Natural killer cell (primary cell): ENCODE measurements at regions of chr1 and their contacts with region 1.

Region 1: DNA sequence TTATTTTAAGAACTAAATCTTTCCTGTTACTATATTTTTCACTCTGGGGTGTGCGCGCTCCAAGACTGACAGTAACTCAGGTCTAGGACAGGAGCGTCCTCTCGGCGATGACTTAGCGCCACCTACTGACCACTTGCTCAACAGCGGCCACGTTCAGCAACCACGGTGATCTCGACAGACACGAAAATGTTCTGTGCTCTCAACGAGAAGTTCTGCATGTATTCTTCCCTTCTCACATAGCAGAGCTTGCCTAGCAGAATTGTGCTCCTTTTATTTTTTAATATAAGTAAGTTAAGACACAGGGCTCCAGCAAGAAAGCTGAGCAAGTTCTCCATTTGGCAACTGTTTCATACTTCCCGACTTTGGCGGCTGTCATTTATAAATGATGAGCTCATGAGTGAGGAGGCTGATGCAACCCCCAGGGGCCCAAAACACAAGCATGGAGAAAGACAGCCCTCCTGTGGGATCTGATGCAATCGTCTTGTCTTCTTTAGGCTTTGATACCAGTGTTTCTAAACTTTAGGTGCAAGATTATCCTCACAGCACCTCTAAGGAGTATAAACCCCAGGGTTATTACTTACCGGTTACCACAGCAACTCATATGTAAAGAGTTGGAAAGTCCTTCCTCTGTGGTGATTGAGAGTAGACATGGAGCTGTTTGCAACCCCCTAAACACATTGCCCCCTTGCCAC is 92.6 kb downstream of the HHIPL2 start:
- DNase-seq: peak; percentile 66 to 92
- ATAC-seq: peak; percentile 82 to 99 (median 98)
- H3K4me3 ChIP-seq: no peak overlapping the region
- H3K4me3 Mint-ChIP-seq: no peak overlapping the region
- H3K27ac ChIP-seq: no peak overlapping the region
- H3K27ac Mint-ChIP-seq: no peak overlapping the region
- H3K4me1 ChIP-seq: peaks cover 9% of the 10 kb centered on the region
- H3K4me1 Mint-ChIP-seq: peaks cover 6 to 7% of the 10 kb centered on the region in 2 donors
- H3K27me3 ChIP-seq: no peaks in the 10 kb centered on the region
- H3K27me3 Mint-ChIP-seq: peaks cover 0 to 2% of the 10 kb centered on the region in 2 donors
- CTCF ChIP-seq: peak; percentile 85

Region 2: GRCh38 chr1:220810179-220810653 is 1645.1 kb before region 1 on chr1:
- intact Hi-C with region 1: loop called (anchors 1 kb)
- DNase-seq: peak; percentile 58 to 84
- ATAC-seq: peak; percentile 93 to 99 (median 99)
- H3K4me3 ChIP-seq: no peak overlapping the region
- H3K4me3 Mint-ChIP-seq: peak overlapping the region; percentile 61
- H3K27ac ChIP-seq: no peak overlapping the region
- H3K27ac Mint-ChIP-seq: no peak overlapping the region
- H3K4me1 ChIP-seq: no peaks in the 10 kb centered on the region
- H3K4me1 Mint-ChIP-seq: peaks cover 6 to 9% of the 10 kb centered on the region in 2 donors
- H3K27me3 ChIP-seq: no peaks in the 10 kb centered on the region
- H3K27me3 Mint-ChIP-seq: peaks cover 12 to 23% of the 10 kb centered on the region in 2 donors
- CTCF ChIP-seq: peak; percentile 90

Region 3: GRCh38 chr1:220879076-220879508 is 1576.2 kb before region 1 on chr1 and contains the start of gene HLX:
- intact Hi-C with region 1: loop called (anchors 10 kb)
- DNase-seq: peak in 1 of 2 donors; percentile 11
- ATAC-seq: peak; percentile 48 to 85 (median 49)
- H3K4me3 ChIP-seq: peak within 1 kb of the TSS; percentile 30
- H3K4me3 Mint-ChIP-seq: peak within 1 kb of the TSS; percentile 84
- H3K27ac ChIP-seq: peak within 1 kb of the TSS; percentile 34
- H3K27ac Mint-ChIP-seq: no peak within 1 kb of the TSS
- H3K4me1 ChIP-seq: peaks cover 41% of the 10 kb centered on the region
- H3K4me1 Mint-ChIP-seq: peaks cover 28 to 34% of the 10 kb centered on the region in 2 donors
- H3K27me3 ChIP-seq: peaks cover 25% of the 10 kb centered on the region
- H3K27me3 Mint-ChIP-seq: peaks cover 69 to 79% of the 10 kb centered on the region in 2 donors
- CTCF ChIP-seq: no peak
- total RNA-seq, gene HLX: 0.93 to 19.3 (median 1.0) TPM

Region 4: GRCh38 chr1:221435504-221435904 is 1019.8 kb before region 1 on chr1:
- intact Hi-C with region 1: loop called (anchors 1 kb)
- DNase-seq: peak in 1 of 2 donors; percentile 59
- ATAC-seq: peak; percentile 68 to 87 (median 74)
- H3K4me3 ChIP-seq: no peak overlapping the region
- H3K4me3 Mint-ChIP-seq: no peak overlapping the region
- H3K27ac ChIP-seq: no peak overlapping the region
- H3K27ac Mint-ChIP-seq: no peak overlapping the region
- H3K4me1 ChIP-seq: no peaks in the 10 kb centered on the region
- H3K4me1 Mint-ChIP-seq: peaks cover 0 to 4% of the 10 kb centered on the region in 2 donors
- H3K27me3 ChIP-seq: no peaks in the 10 kb centered on the region
- H3K27me3 Mint-ChIP-seq: peaks cover 4 to 25% of the 10 kb centered on the region in 2 donors
- CTCF ChIP-seq: peak; percentile 97

Region 5: DNA sequence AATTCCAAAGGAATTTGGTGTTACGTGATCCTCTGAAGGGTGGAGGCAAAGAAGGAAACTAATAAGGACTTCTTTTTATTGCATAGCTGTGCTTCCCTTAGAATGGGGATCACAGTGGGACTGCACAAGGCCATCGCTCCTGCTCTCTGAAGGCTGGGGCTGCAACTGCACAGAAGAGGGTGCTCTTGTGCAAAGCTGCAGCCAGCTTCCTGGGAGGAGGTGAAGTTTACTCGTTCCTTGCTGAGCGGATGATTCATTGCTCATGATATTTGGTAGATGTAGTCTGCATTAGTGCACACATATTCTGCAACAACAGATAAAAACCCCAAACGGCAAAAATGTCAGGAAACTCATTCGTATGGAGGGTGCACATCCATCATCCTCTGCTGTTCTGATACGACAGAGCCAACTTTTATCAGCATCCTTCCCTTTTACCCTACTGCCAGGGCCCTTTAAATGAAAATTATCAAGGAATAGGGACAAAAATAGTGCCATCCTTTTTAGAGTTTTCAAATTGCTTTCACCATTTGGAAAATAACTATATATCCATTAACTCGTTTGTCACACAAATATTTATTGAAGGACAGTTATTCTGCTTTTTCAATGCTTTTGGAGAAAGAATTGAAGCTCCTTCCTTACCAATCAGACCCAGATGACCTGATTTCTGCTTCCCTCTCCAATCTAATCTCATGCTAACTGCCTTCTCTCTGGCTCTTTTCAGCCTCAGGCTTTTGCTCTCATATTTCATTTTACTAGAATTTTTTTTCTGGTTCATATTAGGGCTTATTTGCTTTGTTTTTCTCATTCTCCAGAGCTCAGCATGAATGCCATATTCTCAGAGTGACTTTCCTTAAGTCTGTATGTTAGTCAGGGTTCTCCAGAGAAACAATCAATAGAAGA is 977.0 kb before region 1 on chr1:
- intact Hi-C with region 1: loop called (anchors 1 kb)
- DNase-seq: peak; percentile 42 to 71
- ATAC-seq: peak; percentile 72 to 98 (median 91)
- H3K4me3 ChIP-seq: no peak overlapping the region
- H3K4me3 Mint-ChIP-seq: no peak overlapping the region
- H3K27ac ChIP-seq: no peak overlapping the region
- H3K27ac Mint-ChIP-seq: no peak overlapping the region
- H3K4me1 ChIP-seq: no peaks in the 10 kb centered on the region
- H3K4me1 Mint-ChIP-seq: no peaks in the 10 kb centered on the region
- H3K27me3 ChIP-seq: no peaks in the 10 kb centered on the region
- H3K27me3 Mint-ChIP-seq: peaks cover 4 to 12% of the 10 kb centered on the region in 2 donors
- CTCF ChIP-seq: peak; percentile 71

Region 6: DNA sequence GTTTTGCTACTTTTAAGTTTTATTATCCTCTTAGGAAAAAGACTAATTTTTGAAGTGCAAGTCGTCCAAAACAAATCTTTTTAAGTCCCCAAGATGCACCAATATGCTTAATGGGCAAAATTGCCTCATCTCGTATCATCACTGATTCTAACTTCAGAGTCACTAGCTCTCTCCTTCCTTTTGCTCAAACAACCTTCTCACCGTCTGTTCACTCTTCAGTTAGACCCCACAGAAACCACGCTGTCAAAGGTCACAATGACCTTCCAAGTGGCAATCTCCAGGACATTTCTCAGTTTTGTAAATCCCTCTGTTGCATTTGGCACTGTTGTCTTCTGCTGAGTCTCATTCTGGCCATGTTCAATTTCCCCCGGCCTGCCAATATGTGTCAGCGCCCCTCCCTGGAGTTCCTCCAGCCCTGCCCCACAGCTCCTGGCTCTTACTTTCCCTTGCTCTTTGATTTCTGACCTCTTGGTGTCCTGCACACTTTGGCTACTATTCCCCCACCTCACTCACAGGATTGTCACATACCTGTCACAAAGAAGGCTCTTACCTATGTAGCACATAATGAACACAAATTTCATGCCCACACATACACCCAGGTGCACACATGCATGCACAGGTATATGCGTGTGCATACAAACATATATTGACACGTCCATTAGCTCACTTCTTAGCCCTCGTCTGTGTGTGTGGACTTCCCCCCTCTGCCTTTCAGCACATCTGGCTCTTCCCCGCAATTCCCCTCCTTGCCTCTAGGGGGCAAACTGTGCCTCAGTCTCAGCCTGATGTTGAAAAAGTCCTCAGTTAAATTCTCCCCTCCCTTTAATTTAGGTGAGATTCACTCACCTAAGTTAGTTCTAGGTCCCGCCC is 359.5 kb before region 1 on chr1:
- intact Hi-C with region 1: loop called (anchors 1 kb)
- DNase-seq: peak; percentile 49 to 81
- ATAC-seq: peak; percentile 77 to 85 (median 80)
- H3K4me3 ChIP-seq: no peak overlapping the region
- H3K4me3 Mint-ChIP-seq: no peak overlapping the region
- H3K27ac ChIP-seq: no peak overlapping the region
- H3K27ac Mint-ChIP-seq: no peak overlapping the region
- H3K4me1 ChIP-seq: peaks cover 15% of the 10 kb centered on the region
- H3K4me1 Mint-ChIP-seq: no peaks in the 10 kb centered on the region
- H3K27me3 ChIP-seq: no peaks in the 10 kb centered on the region
- H3K27me3 Mint-ChIP-seq: peaks cover 0 to 12% of the 10 kb centered on the region in 2 donors
- CTCF ChIP-seq: peak; percentile 95